ENCODE measurements at regions of chr12 and their contacts with region 1.

Region 1: GRCh38 chr12:3533703-3534386 is 42.8 kb downstream of the PRMT8 start:
- DNase-seq: no peak

Region 2: GRCh38 chr12:3554371-3555115 is 20.7 kb after region 1 on chr12:
- intact Hi-C with region 1: no loop called
- DNase-seq: no peak

Region 3: DNA sequence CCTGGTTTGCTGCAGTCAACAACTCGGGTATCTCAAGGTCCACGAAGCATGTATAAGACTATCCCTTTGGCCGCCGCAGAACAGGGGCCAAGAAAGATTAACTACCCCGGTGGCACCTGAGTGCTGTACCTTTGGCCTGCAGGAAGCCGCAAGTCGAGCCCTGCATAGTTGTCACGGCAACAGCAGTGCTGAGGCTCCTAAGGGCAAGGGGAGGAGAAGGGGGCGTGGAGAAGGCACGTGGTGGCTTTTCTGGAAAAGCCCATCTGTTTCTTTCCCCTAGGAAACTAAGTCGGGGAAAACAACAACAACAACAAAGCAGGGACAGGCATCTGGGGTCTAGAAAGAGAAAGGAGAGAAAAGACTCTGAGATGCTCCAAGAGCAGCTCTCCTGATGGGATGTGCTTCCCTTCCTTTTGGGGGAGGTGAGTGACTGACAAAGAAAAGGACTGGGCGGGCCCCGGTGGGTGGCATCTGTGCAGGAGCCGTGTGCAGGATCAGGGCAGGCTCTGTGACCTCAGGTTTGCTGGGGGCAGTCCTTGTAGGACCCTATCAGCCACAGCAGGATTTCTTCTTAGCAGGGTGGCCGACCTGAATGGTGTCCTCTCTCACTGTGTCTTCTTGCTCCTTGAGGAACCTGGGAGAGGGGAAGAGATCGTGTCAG is 81.1 kb after region 1 on chr12:
- intact Hi-C with region 1: loop called (anchors 5 kb)
- DNase-seq: no peak

Measured in cardiac septum (tissue), 1 donor.